Activated CD8-positive, alpha-beta memory T cell treated with anti-CD3 and anti-CD28 coated beads, Interleukin-2, amount 10 ng/mL, durations not matched to agents 7 days and 5 days (primary cell): ENCODE measurements at regions of chr18 and their contacts with region 1.

Region 1: GRCh38 chr18:8988261-8988871 is 114.1 kb upstream of the NDUFV2 start:
- DNase-seq: peak; percentile 69
- ATAC-seq: peak; percentile 82
- H3K4me3 Mint-ChIP-seq: no peak overlapping the region
- H3K27ac Mint-ChIP-seq: no peak overlapping the region
- H3K4me1 Mint-ChIP-seq: peaks cover 12% of the 10 kb centered on the region
- H3K27me3 Mint-ChIP-seq: peaks cover 20% of the 10 kb centered on the region

Region 2: GRCh38 chr18:8654503-8655451 is 333.6 kb before region 1 on chr18:
- CTCF ChIA-PET with region 1: interaction called, 22 read pairs
- DNase-seq: no peak
- ATAC-seq: no peak
- H3K4me3 Mint-ChIP-seq: no peak overlapping the region
- H3K27ac Mint-ChIP-seq: no peak overlapping the region
- H3K4me1 Mint-ChIP-seq: no peaks in the 10 kb centered on the region
- H3K27me3 Mint-ChIP-seq: peaks cover 30% of the 10 kb centered on the region

Region 3: DNA sequence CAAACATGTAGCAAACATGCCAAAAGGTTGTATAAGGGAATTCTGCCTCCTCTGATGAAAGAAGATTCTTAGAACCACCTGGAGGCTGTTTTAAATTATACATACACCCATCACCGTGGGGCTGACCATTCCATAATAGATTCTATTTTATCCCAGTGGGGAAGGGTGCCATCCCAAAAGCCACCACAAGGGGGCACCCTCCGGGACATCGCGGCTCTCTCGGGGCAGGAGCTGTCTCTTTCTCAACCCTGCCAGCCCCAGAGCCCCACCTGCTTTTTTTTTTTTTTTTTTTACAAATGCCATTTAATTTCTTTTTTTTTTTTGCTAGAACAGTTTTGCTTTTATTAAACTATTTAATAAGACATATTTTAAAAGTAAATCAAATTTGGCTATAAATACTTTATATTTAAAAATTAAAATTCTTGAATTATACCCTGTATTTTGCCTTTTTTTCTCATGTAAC is 291.6 kb before region 1 on chr18:
- CTCF ChIA-PET with region 1: interaction called, 39 read pairs
- DNase-seq: peak; percentile 72
- ATAC-seq: peak; percentile 78
- H3K4me3 Mint-ChIP-seq: no peak overlapping the region
- H3K27ac Mint-ChIP-seq: no peak overlapping the region
- H3K4me1 Mint-ChIP-seq: no peaks in the 10 kb centered on the region
- H3K27me3 Mint-ChIP-seq: peaks cover 20% of the 10 kb centered on the region

Region 4: DNA sequence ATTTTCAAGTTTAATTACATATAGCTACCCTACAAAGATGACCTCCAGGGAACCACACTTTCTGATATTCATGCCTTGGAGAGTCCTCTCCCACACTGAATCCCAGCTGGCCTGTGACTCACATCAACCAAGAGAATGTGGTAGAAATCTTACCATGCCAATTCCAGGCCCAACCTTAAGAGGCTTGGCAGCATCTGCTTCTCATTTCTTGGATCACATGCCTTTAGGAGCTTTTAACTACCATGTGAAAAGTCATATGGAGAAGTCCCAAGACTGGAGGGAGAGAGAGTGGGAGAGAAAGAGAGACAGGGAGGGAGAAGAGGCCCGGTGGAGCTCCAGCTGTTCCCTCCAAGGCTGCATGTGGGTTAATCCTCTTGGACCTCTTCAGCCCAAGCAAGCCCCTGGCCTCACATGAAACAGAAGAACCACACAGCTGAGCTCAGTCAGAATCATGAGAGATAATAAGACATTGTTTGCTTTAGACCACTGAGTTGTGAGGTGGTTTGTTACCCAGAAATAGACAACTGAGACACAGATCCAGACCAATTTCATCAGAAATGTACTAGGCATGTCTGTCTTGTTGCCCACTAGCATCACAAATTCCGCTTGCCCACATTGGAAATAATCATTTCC is 92.3 kb before region 1 on chr18:
- CTCF ChIA-PET with region 1: no interaction called
- DNase-seq: no peak
- ATAC-seq: no peak
- H3K4me3 Mint-ChIP-seq: no peak overlapping the region
- H3K27ac Mint-ChIP-seq: no peak overlapping the region
- H3K4me1 Mint-ChIP-seq: no peaks in the 10 kb centered on the region
- H3K27me3 Mint-ChIP-seq: peaks cover 9% of the 10 kb centered on the region

Region 5: DNA sequence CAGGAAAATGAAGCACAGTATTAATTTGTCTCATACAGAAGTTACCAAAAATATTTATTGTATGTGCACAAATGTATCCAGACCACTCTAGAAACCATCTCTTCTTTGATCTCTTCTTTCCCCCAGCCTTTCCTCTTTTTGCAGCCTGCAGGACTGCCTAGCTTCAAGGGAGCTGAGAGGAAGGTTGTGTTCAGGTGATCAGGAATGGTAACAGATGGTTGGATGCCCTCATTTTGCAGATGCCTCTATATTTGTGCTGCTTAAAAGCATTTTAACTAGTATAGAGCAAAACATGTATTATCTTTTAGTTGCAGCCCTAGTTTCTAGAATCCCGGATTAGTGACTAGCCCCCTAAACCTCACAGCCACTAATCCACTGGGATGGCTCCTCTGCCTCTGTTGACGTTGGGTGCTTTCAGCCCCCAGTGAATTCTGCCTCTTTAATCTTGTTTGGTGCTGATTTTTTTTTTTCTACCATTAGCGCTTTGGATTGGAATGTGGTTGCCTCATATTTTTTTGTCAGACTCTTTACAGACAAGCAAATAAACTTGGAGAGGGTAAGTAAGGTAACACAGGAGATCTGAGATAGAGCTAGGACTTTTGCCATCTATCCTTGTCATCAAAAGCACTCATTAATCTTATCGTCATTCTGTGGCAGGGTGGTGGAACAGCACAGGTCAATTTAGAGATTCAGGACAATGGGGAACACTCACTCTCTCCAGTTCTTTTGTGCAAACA is 10.3 kb after region 1 on chr18:
- CTCF ChIA-PET with region 1: interaction called, 10 read pairs
- DNase-seq: no peak
- ATAC-seq: no peak
- H3K4me3 Mint-ChIP-seq: no peak overlapping the region
- H3K27ac Mint-ChIP-seq: no peak overlapping the region
- H3K4me1 Mint-ChIP-seq: peaks cover 3% of the 10 kb centered on the region
- H3K27me3 Mint-ChIP-seq: peaks cover 44% of the 10 kb centered on the region